Calu3 (cell line): ENCODE measurements at regions of chr4 and their contacts with region 1.

Region 1: DNA sequence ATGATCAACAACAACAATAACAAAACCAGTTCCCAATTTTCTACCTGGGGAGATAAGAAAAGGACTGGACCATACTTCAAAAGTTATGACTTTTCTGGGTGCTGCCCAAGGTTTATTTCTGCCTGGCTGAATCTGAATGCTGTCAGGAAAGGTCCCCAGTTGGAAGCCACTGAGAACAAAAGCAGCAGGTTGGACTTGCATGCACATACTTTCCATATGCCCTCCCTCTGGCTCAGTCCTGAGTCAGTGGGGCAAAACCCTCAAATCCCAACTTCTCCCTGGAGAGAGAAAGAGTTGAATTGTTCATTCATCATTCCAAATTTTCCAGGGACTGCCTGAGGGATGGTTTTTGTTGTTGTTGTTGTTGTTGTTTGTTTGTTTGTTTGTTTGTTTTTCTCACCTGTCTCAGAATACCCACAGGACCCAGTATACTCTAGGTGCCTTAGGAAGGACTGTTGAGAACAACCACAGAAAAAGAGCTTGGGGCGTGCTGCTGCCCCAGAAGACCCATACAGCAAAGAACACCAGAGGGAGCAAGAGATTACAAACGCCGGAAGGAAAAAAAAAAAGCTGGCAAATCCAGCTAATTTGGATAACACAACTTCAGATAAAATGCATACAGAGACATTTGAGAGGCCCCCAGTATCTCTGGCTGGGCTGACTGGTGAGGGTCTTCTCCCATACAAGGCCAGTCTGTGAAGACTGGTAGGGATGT is 138.9 kb upstream of the INPP4B start:
- DNase-seq: peak; percentile 39
- H3K4me3 Mint-ChIP-seq: no peak overlapping the region
- H3K27ac Mint-ChIP-seq: no peak overlapping the region
- H3K4me1 Mint-ChIP-seq: peaks cover 27% of the 10 kb centered on the region
- H3K27me3 Mint-ChIP-seq: no peaks in the 10 kb centered on the region
- CTCF ChIP-seq: peak; percentile 58

Region 2: GRCh38 chr4:143025081-143025704 is 40.2 kb after region 1 on chr4:
- CTCF ChIA-PET with region 1: interaction called, 17 read pairs
- intact Hi-C with region 1: loop called (anchors 2 kb)
- DNase-seq: peak; percentile 36
- H3K4me3 Mint-ChIP-seq: no peak overlapping the region
- H3K27ac Mint-ChIP-seq: no peak overlapping the region
- H3K4me1 Mint-ChIP-seq: peaks cover 23% of the 10 kb centered on the region
- H3K27me3 Mint-ChIP-seq: no peaks in the 10 kb centered on the region
- CTCF ChIP-seq: no peak

Region 3: DNA sequence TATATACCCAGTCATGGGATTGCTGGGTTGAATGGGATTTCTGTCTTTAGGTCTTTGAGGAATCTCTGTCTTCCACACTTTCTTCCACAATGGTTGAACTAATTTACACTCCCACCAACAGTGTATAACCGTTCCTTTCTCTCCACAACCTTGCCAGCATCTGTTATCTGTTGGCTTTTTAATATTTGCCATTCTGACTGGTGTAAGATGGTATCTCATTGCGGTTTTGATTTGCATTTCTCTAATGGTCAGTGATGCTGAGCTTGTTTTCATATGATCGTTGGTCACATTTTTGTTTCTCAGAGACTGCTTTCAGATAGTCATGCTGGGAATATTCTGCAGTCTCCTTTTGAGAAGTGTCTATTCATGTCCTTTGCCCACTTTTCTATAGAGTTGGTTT is 74.3 kb after region 1 on chr4:
- CTCF ChIA-PET with region 1: no interaction called
- intact Hi-C with region 1: no loop called
- DNase-seq: no peak
- H3K4me3 Mint-ChIP-seq: no peak overlapping the region
- H3K27ac Mint-ChIP-seq: no peak overlapping the region
- H3K4me1 Mint-ChIP-seq: peaks cover 4% of the 10 kb centered on the region
- H3K27me3 Mint-ChIP-seq: no peaks in the 10 kb centered on the region
- CTCF ChIP-seq: no peak

Region 4: DNA sequence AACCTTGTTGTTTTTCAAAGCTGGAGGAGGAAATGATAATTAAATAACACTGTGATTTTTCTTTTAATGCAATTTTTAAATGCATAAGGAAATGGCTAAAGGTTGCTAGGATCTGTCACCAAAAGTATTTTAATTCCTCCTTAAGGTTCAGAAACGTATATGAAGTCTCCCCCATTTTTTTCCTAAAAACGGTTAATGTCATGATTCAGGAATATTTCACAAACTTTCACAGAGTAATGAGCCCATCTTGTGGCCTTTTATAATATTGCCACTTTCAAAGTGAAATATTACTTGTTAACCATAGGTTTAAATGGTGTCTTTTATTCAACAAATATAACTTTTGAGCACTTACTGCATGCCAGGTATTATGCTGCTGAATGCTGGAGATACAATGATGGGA is 100.2 kb after region 1 on chr4:
- CTCF ChIA-PET with region 1: interaction called, 28 read pairs
- intact Hi-C with region 1: loop called (anchors 1 kb)
- DNase-seq: no peak
- H3K4me3 Mint-ChIP-seq: no peak overlapping the region
- H3K27ac Mint-ChIP-seq: no peak overlapping the region
- H3K4me1 Mint-ChIP-seq: peaks cover 61% of the 10 kb centered on the region
- H3K27me3 Mint-ChIP-seq: no peaks in the 10 kb centered on the region
- CTCF ChIP-seq: no peak

Region 5: GRCh38 chr4:143178923-143179322 is 193.9 kb after region 1 on chr4:
- CTCF ChIA-PET with region 1: interaction called, 15 read pairs
- intact Hi-C with region 1: loop called (anchors 2 kb)
- DNase-seq: peak; percentile 43
- H3K4me3 Mint-ChIP-seq: peak overlapping the region; percentile 35
- H3K27ac Mint-ChIP-seq: peak overlapping the region; percentile 43
- H3K4me1 Mint-ChIP-seq: peaks cover 17% of the 10 kb centered on the region
- H3K27me3 Mint-ChIP-seq: no peaks in the 10 kb centered on the region
- CTCF ChIP-seq: no peak